MCF 10A (cell line): ENCODE measurements at regions of chr19 and their contacts with region 1.

Region 1: DNA sequence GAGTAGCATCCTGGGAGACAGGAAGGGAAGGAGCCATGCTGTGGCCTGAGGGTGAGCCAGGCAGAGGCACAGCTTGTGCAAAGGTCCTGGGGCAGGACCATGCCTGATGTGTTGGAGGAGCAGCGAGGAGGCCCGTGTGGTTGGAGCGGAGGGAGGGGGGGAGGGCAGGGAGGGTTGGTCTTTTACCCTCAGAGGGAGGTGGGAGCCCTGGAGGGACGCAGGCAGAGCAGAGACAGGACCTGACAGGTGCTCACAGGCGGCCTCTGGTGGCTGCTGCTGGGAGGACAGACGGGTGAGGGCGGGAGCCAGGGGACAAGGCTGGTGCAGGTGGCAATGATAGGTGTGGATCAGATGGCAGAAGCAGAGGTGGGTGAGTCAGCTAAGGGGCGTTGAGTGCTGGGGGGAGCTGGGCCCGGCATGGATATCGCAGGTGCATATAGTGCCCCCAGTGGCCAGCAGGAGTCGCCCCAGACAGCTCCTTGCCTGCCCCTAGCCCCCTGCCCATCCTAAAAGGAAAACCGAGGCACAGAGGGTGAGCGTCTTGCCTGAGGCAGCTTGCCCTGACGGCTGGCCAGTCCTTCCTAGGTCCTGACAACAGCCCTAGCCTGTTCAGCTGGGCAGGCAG is 9.8 kb upstream of the GNA15 start:
- DNase-seq: peak; percentile 41
- H3K4me3 Mint-ChIP-seq: no peak overlapping the region
- H3K27ac Mint-ChIP-seq: no peak overlapping the region
- H3K4me1 Mint-ChIP-seq: no peaks in the 10 kb centered on the region
- H3K27me3 Mint-ChIP-seq: no peaks in the 10 kb centered on the region
- CTCF ChIP-seq: peak; percentile 63

Region 2: GRCh38 chr19:3108775-3109174 is 17.2 kb before region 1 on chr19:
- CTCF ChIA-PET with region 1: interaction called, 42 read pairs
- POLR2A ChIA-PET with region 1: no interaction called
- intact Hi-C with region 1: no loop called
- DNase-seq: peak; percentile 67
- H3K4me3 Mint-ChIP-seq: no peak overlapping the region
- H3K27ac Mint-ChIP-seq: peak overlapping the region; percentile 53
- H3K4me1 Mint-ChIP-seq: peaks cover 6% of the 10 kb centered on the region
- H3K27me3 Mint-ChIP-seq: no peaks in the 10 kb centered on the region
- CTCF ChIP-seq: peak; percentile 92

Region 3: DNA sequence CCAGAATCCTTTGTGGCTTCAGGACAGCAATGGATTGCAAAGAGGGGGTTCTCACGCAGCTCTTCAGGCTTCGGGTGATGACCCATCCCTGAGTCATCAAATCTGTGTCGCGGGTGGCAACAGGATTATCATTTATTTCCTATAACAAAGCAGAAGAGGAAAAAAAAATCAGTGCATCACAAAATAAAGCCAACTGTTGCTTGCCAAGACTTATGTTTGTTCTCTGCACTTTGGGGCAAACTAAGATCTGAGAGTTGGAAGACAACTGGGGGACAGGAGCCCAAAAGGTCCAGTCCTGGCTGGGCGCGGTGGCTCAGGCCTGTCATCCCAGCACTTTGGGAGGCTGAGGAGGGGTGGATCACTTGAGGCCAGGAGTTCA is 16.3 kb after region 1 on chr19:
- CTCF ChIA-PET with region 1: interaction called, 18 read pairs
- POLR2A ChIA-PET with region 1: interaction called, 11 read pairs
- intact Hi-C with region 1: no loop called
- DNase-seq: peak; percentile 93
- H3K4me3 Mint-ChIP-seq: peak overlapping the region; percentile 63
- H3K27ac Mint-ChIP-seq: peak overlapping the region; percentile 97
- H3K4me1 Mint-ChIP-seq: peaks cover 21% of the 10 kb centered on the region
- H3K27me3 Mint-ChIP-seq: no peaks in the 10 kb centered on the region
- CTCF ChIP-seq: no peak

Region 4: DNA sequence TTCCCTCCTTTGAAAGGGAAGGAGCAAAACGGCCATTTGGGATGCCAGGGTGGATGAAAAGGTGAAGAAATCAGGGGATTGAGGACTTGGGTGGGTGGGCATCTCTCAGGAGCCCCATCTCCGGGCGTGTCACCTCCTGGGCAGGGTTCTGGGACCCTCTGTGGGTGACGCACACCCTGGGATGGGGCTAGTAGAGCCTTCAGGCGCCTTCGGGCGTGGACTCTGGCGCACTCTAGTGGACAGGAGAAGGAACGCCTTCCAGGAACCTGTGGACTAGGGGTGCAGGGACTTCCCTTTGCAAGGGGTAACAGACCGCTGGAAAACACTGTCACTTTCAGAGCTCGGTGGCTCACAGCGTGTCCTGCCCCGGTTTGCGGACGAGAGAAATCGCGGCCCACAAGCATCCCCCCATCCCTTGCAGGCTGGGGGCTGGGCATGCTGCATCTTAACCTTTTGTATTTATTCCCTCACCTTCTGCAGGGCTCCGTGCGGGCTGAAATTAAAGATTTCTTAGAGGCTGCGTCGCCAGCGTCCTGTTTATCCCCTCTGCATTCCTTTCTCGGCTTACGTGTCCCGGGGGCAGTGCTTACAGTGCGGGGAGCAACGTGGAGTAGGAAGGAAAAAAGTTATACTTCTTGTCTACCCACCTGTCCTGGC is 37.3 kb after region 1 on chr19:
- CTCF ChIA-PET with region 1: interaction called, 70 read pairs
- POLR2A ChIA-PET with region 1: interaction called, 16 read pairs
- intact Hi-C with region 1: loop called (anchors 1 kb)
- DNase-seq: peak; percentile 66
- H3K4me3 Mint-ChIP-seq: no peak overlapping the region
- H3K27ac Mint-ChIP-seq: no peak overlapping the region
- H3K4me1 Mint-ChIP-seq: peaks cover 5% of the 10 kb centered on the region
- H3K27me3 Mint-ChIP-seq: no peaks in the 10 kb centered on the region
- CTCF ChIP-seq: peak; percentile 93

Region 5: DNA sequence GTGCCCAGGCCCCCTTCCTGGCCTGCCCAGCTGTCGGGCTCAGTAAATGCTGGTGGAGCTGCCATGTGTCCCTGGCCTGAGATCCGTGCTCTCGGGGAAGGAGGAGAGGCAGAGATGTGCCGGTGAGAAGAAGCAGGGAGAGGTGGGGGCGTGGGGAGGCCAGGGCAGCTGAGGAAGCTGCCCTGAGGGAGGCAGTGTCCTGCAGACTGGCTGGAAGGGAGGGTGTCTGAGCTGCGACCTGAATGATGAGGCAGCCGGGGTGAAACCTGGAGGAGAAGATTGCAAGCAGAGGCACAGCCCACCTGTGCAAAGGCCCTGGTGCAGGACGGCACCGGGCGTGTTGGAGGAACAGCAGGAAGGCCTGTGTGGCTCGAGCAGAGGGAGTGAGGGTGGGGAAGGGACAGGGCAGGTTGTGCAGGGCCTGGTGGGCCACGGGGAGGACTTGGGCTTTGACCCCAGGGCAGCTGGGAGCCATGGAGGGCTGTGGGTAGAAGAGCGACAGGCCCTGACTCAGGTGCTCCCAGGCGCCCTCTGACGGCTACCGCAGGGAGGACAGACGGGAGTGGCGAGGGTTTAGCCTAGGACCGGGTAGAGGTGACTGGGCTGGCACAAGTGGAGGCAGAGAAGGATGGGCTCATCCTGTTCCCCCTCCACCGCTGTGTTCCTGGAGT is 84.5 kb after region 1 on chr19:
- CTCF ChIA-PET with region 1: interaction called, 3 read pairs
- POLR2A ChIA-PET with region 1: no interaction called
- intact Hi-C with region 1: loop called (anchors 2 kb)
- DNase-seq: peak; percentile 60
- H3K4me3 Mint-ChIP-seq: no peak overlapping the region
- H3K27ac Mint-ChIP-seq: no peak overlapping the region
- H3K4me1 Mint-ChIP-seq: no peaks in the 10 kb centered on the region
- H3K27me3 Mint-ChIP-seq: no peaks in the 10 kb centered on the region
- CTCF ChIP-seq: peak; percentile 69